Caco-2 (cell line): ENCODE measurements at regions of chr22 and their contacts with region 1.

Region 1: GRCh38 chr22:37608477-37609239 is at the start of gene GGA1:
- DNase-seq: peak; percentile 94
- H3K4me3 ChIP-seq: peak within 1 kb of the TSS; percentile 75
- H3K4me3 Mint-ChIP-seq: peak within 1 kb of the TSS; percentile 87
- H3K27ac Mint-ChIP-seq: peak within 1 kb of the TSS; percentile 95
- H3K4me1 ChIP-seq: peaks cover 12% of the 10 kb centered on the region
- H3K4me1 Mint-ChIP-seq: peaks cover 6% of the 10 kb centered on the region
- H3K27me3 ChIP-seq: no peaks in the 10 kb centered on the region
- H3K27me3 Mint-ChIP-seq: no peaks in the 10 kb centered on the region
- CTCF ChIP-seq: no peak
- total RNA-seq, gene GGA1: 65.7 and 72.8 TPM in 2 replicates

Region 2: GRCh38 chr22:37561212-37562048 is 47.2 kb before region 1 on chr22:
- CTCF ChIA-PET with region 1: interaction called, 15 read pairs
- POLR2A ChIA-PET with region 1: interaction called, 7 read pairs
- intact Hi-C with region 1: loop called (anchors 5 kb)
- DNase-seq: peak; percentile 89 to 94
- H3K4me3 ChIP-seq: peak overlapping the region; percentile 81
- H3K4me3 Mint-ChIP-seq: peak overlapping the region; percentile 76
- H3K27ac Mint-ChIP-seq: peak overlapping the region; percentile 70
- H3K4me1 ChIP-seq: peaks cover 46% of the 10 kb centered on the region
- H3K4me1 Mint-ChIP-seq: peaks cover 22% of the 10 kb centered on the region
- H3K27me3 ChIP-seq: no peaks in the 10 kb centered on the region
- H3K27me3 Mint-ChIP-seq: no peaks in the 10 kb centered on the region
- CTCF ChIP-seq: peak; percentile 86 to 90

Region 3: GRCh38 chr22:37575490-37576003 is 33.1 kb before region 1 on chr22:
- CTCF ChIA-PET with region 1: interaction called, 11 read pairs
- POLR2A ChIA-PET with region 1: interaction called, 12 read pairs
- intact Hi-C with region 1: no loop called
- DNase-seq: no peak
- H3K4me3 ChIP-seq: no peak overlapping the region
- H3K4me3 Mint-ChIP-seq: no peak overlapping the region
- H3K27ac Mint-ChIP-seq: no peak overlapping the region
- H3K4me1 ChIP-seq: peaks cover 41% of the 10 kb centered on the region
- H3K4me1 Mint-ChIP-seq: peaks cover 20% of the 10 kb centered on the region
- H3K27me3 ChIP-seq: no peaks in the 10 kb centered on the region
- H3K27me3 Mint-ChIP-seq: no peaks in the 10 kb centered on the region
- CTCF ChIP-seq: no peak

Region 4: DNA sequence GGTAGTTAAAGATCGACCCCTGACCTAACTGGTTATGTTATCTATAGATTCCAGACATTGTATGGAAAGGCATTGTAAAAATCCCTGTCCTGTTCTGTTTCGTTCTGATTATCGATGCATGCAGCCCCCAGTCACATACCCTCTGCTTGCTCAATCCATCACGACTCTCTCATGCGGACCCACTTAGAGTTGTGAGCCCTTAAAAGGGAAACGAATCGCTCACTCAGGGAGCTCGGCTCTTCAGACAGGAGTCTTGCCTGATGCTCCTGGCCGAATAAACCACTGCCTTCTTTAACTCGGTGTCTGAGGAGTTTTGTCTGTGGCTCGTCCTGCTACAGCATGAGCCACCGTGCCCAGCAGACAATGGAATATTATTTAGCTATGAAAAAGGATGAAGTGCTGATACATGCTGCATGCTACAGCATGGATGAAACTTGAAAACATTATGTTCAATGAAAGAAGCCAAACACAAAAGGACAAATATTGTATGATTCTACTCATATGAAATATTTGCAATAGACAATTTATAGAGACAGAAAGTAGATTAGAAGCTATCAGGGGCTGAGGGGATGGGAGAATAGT is 16.7 kb before region 1 on chr22:
- CTCF ChIA-PET with region 1: interaction called, 31 read pairs
- POLR2A ChIA-PET with region 1: interaction called, 17 read pairs
- intact Hi-C with region 1: loop called (anchors 1 kb)
- DNase-seq: no peak
- H3K4me3 ChIP-seq: no peak overlapping the region
- H3K4me3 Mint-ChIP-seq: peak overlapping the region; percentile 59
- H3K27ac Mint-ChIP-seq: peak overlapping the region; percentile 65
- H3K4me1 ChIP-seq: peaks cover 10% of the 10 kb centered on the region
- H3K4me1 Mint-ChIP-seq: peaks cover 24% of the 10 kb centered on the region
- H3K27me3 ChIP-seq: no peaks in the 10 kb centered on the region
- H3K27me3 Mint-ChIP-seq: no peaks in the 10 kb centered on the region
- CTCF ChIP-seq: no peak

Region 5: GRCh38 chr22:37658133-37659065 is 49.7 kb after region 1 on chr22 and contains the start of gene PDXP:
- CTCF ChIA-PET with region 1: interaction called, 14 read pairs
- POLR2A ChIA-PET with region 1: interaction called, 22 read pairs
- intact Hi-C with region 1: no loop called
- DNase-seq: peak; percentile 98 to 99
- H3K4me3 ChIP-seq: peak within 1 kb of the TSS; percentile 98
- H3K4me3 Mint-ChIP-seq: peak within 1 kb of the TSS; percentile 89
- H3K27ac Mint-ChIP-seq: peak within 1 kb of the TSS; percentile 84
- H3K4me1 ChIP-seq: peaks cover 18% of the 10 kb centered on the region
- H3K4me1 Mint-ChIP-seq: peaks cover 19% of the 10 kb centered on the region
- H3K27me3 ChIP-seq: no peaks in the 10 kb centered on the region
- H3K27me3 Mint-ChIP-seq: no peaks in the 10 kb centered on the region
- CTCF ChIP-seq: no peak
- total RNA-seq, gene PDXP: 24.1 and 24.5 TPM in 2 replicates